ENCODE measurements at regions of chr9 and their contacts with region 1.

Region 1: DNA sequence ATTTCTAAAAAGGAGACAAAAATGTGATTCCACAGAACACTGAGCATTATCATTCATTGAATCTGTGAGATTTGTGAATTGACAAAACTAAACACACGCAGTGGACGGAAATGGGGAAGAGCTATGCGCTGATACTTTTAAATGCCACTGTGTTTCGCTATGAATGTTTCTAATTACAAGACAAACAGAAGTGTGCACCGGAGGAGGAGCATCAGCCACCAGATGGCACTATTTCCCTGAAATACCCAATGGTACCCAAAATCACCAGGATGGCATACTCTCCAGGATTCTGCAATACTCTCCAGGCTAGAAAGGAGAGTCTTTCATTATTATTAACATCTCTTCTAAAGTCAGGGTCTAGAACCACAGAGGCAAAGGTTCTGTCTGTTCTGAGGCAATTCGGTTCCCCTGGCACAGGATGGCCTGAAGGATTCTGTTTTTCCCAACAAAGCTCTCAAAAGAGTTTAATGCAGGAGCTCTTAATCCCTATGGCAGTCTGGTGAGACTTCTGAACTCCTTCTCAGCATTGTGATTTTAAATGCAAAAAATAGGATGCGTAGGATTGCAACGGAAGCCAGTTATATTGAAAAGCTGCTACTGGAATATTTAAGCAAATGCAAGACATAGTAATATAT is 13.8 kb upstream of the PUM3 start:
- DNase-seq: peak; percentile 29 to 69
- ATAC-seq: peak; percentile 80

Region 2: GRCh38 chr9:2979893-2980610 is 122.4 kb after region 1 on chr9:
- intact Hi-C with region 1: no loop called
- DNase-seq: no peak
- ATAC-seq: no peak

Region 3: GRCh38 chr9:4366591-4367330 is 1509.1 kb after region 1 on chr9:
- intact Hi-C with region 1: loop called in 1 of 2 experiments (anchors 5 kb)
- DNase-seq: peak; percentile 26 to 31
- ATAC-seq: peak; percentile 58